BJ (cell line): ENCODE measurements at regions of chr3 and their contacts with region 1.

Region 1: DNA sequence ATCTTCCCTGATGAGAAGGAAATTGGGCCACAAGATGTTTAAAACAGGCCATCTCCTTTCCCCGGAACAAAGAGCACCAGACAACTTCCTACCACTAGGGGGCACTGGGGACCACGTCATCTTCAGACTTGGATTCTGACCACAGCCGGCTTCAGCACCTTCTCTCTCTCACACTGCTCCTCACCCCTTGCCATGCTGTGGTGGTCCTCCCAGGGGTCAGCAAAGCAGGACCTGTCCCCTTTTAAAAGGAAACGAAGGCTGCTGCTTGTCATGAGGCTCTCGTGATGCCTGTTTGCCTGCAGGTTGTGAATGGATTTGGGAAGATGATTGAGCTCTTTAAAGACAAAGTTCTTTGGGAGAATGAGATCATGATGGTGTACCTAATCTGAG is 16.2 kb downstream of the RFT1 start:
- DNase-seq: no peak
- H3K4me3 ChIP-seq: no peak overlapping the region
- H3K27me3 ChIP-seq: no peaks in the 10 kb centered on the region
- CTCF ChIP-seq: peak; percentile 93

Region 2: GRCh38 chr3:52694528-52695189 is 419.3 kb before region 1 on chr3:
- CTCF ChIA-PET with region 1: no interaction called
- POLR2A ChIA-PET with region 1: no interaction called
- DNase-seq: no peak
- H3K4me3 ChIP-seq: no peak overlapping the region
- H3K27me3 ChIP-seq: no peaks in the 10 kb centered on the region
- CTCF ChIP-seq: no peak

Region 3: DNA sequence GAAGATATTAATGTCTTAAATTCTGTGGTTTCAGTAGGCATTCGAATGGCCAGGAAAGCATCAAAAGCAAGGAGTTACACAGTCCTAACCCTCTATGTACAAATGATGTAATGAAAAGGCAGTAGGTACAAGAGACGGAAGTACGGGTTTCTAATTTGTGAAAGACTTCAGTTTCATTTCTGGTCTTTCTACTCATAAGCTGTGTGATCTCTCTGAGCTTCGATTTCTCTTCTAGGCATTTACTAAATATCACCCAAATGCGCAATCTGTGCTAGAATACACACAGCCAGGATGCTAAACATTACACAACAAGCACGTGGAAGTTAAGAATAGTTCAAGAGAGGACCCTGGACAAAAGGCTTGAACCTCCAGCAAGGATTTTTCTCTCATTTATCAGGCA is 198.7 kb before region 1 on chr3:
- CTCF ChIA-PET with region 1: no interaction called
- POLR2A ChIA-PET with region 1: interaction called, 11 read pairs
- DNase-seq: no peak
- H3K4me3 ChIP-seq: no peak overlapping the region
- H3K27me3 ChIP-seq: no peaks in the 10 kb centered on the region
- CTCF ChIP-seq: no peak

Region 4: DNA sequence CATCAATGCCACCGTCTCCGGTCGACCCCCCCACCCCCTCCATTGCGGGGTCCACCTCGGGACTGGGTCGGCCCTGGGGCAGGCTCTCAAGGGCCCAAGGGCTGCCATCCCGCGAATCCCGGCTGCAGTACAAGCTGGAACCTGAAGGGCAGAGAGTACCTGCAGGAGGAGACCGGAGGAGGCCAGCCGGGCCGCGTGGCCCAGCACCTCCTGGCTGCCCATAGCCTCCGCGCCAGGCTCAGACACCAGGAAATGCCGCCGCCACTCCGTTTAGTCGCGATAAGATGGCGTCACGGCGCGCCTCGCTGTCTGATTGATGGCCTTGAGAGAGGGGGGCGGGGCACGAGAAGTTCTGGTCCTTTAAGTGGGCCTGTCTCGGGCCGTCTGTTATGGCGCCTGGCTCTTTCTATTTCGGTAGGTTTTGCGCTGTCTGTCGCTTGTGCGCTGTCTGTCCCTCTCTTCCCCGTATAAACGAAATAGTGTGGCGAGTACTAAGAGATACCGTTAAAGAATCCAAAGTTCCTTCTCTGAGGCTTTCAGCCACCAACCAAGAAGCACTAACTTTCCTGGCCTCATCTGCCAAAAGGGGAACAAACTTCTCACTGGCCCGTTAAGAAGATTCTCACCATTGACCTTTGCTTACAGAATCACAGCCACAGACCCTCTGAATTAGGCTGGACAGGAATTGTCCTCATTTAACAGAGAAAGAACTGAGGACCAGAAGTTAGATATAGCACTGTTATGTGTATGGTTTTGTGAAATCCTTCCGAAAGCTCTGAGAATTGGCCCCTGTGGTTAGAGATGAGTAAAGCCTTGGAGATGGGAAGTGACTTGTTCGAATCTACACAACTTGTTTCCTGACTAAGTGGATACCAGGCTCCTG is 16.4 kb after region 1 on chr3 and contains the start of gene RFT1:
- CTCF ChIA-PET with region 1: interaction called, 21 read pairs
- POLR2A ChIA-PET with region 1: no interaction called
- DNase-seq: peak; percentile 64
- H3K4me3 ChIP-seq: peak within 1 kb of the TSS; percentile 93
- H3K27me3 ChIP-seq: no peaks in the 10 kb centered on the region
- CTCF ChIP-seq: peak; percentile 27
- polyA plus RNA-seq, gene RFT1: 27.9 and 33.5 TPM in 2 replicates

Region 5: GRCh38 chr3:53160660-53161449 is 46.8 kb after region 1 on chr3 and contains the start of gene PRKCD:
- CTCF ChIA-PET with region 1: interaction called, 10 read pairs
- POLR2A ChIA-PET with region 1: no interaction called
- DNase-seq: no peak
- H3K4me3 ChIP-seq: peak within 1 kb of the TSS; percentile 94
- H3K27me3 ChIP-seq: peaks cover 9% of the 10 kb centered on the region
- CTCF ChIP-seq: peak; percentile 58
- polyA plus RNA-seq, gene PRKCD: 24.2 and 33.5 TPM in 2 replicates

Region 6: GRCh38 chr3:53170325-53171063 is 56.5 kb after region 1 on chr3:
- CTCF ChIA-PET with region 1: interaction called, 10 read pairs
- POLR2A ChIA-PET with region 1: no interaction called
- DNase-seq: no peak
- H3K4me3 ChIP-seq: no peak overlapping the region
- H3K27me3 ChIP-seq: no peaks in the 10 kb centered on the region
- CTCF ChIP-seq: no peak

Region 7: GRCh38 chr3:53382106-53382505 is 268.1 kb after region 1 on chr3:
- CTCF ChIA-PET with region 1: no interaction called
- POLR2A ChIA-PET with region 1: no interaction called
- DNase-seq: no peak
- H3K4me3 ChIP-seq: no peak overlapping the region
- H3K27me3 ChIP-seq: no peaks in the 10 kb centered on the region
- CTCF ChIP-seq: no peak